ENCODE measurements at regions of chr9 and their contacts with region 1.

Region 1: GRCh38 chr9:93566408-93567270 is 9.7 kb upstream of the PHF2 start:
- DNase-seq: peak; percentile 98
- ATAC-seq: peak; percentile 96
- H3K4me3 Mint-ChIP-seq: peak overlapping the region; percentile 85
- H3K27ac Mint-ChIP-seq: peak overlapping the region; percentile 95
- H3K4me1 Mint-ChIP-seq: peaks cover 24% of the 10 kb centered on the region
- H3K27me3 Mint-ChIP-seq: no peaks in the 10 kb centered on the region

Region 2: GRCh38 chr9:93159601-93160471 is 406.8 kb before region 1 on chr9:
- CTCF ChIA-PET with region 1: interaction called, 11 read pairs
- POLR2A ChIA-PET with region 1: no interaction called
- DNase-seq: peak; percentile 77
- ATAC-seq: peak; percentile 94
- H3K4me3 Mint-ChIP-seq: no peak overlapping the region
- H3K27ac Mint-ChIP-seq: no peak overlapping the region
- H3K4me1 Mint-ChIP-seq: peaks cover 18% of the 10 kb centered on the region
- H3K27me3 Mint-ChIP-seq: no peaks in the 10 kb centered on the region

Region 3: DNA sequence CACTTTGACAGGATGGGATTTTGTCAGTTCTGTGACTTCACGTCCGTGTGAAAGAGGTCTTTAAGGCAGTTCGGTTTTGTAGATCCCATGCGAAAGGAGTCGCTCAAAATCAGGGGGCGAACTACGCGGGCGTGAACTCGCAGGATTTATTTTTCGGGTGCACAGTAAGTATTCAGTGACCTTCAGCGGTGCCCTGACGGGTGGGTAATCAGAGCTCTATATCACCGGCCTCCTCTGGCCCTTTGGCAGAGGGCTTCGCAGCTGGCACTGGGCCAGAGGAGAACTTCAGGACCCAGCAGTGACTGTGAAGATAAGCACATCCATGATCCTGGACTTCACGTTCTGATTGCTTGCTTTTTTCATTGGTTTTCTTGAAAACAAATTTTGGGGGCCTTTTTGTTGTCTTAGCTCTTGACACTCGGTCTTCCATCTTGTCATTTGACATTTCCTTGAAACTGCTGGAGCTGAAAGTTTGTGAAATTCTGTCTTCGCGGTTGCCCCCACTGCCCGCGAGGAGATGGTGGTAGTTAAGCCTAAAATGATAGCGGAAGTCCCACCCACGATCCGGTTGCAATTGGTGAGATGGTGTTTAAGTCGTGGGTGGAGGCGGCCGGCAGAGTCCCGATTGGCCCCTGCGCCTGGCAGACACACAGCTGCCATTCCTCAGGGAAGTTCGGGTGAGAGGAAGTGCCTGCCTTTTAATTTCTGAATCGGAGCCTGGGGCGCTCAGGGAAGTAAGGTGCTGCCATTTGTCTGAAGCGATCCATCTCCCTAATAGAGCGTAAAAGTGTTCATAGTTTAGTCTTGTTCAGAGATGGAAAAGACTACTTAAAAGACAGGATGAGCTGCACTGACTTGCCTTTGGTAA is 113.4 kb before region 1 on chr9 and contains the start of gene FAM120AOS:
- CTCF ChIA-PET with region 1: interaction called, 38 read pairs
- POLR2A ChIA-PET with region 1: interaction called, 16 read pairs
- DNase-seq: peak; percentile 91
- ATAC-seq: peak; percentile 77
- H3K4me3 Mint-ChIP-seq: peak within 1 kb of the TSS; percentile 89
- H3K27ac Mint-ChIP-seq: peak within 1 kb of the TSS; percentile 92
- H3K4me1 Mint-ChIP-seq: peaks cover 55% of the 10 kb centered on the region
- H3K27me3 Mint-ChIP-seq: no peaks in the 10 kb centered on the region
- total RNA-seq, gene FAM120AOS: 35.1 to 36.5 TPM

Region 4: GRCh38 chr9:93464395-93464794 is 102.2 kb before region 1 on chr9:
- CTCF ChIA-PET with region 1: interaction called, 26 read pairs
- POLR2A ChIA-PET with region 1: interaction called, 10 read pairs
- DNase-seq: no peak
- ATAC-seq: peak; percentile 28
- H3K4me3 Mint-ChIP-seq: peak overlapping the region; percentile 67
- H3K27ac Mint-ChIP-seq: peak overlapping the region; percentile 92
- H3K4me1 Mint-ChIP-seq: peaks cover 86% of the 10 kb centered on the region
- H3K27me3 Mint-ChIP-seq: no peaks in the 10 kb centered on the region

Region 5: DNA sequence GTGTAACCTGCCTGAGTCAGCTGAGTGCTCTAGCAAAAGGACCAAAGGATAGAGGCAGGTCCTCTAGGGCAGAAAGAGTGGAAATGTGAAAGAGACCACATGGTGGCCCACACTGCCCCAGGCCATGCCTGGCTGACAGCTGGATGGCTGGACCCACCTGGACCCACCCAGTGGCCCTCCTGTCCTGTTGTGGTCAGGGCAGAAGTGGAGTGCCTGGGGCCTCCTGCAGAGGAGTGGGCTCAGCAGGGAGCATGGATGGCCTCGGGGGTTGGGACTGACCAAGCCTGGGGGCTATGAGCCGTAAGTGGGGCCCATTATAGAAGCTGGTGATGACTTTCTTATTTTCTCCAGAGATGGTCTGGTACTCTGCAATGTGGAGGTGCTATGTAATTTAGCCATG is 57.6 kb before region 1 on chr9:
- CTCF ChIA-PET with region 1: interaction called, 14 read pairs
- POLR2A ChIA-PET with region 1: no interaction called
- DNase-seq: no peak
- ATAC-seq: no peak
- H3K4me3 Mint-ChIP-seq: no peak overlapping the region
- H3K27ac Mint-ChIP-seq: peak overlapping the region; percentile 0
- H3K4me1 Mint-ChIP-seq: peaks cover 31% of the 10 kb centered on the region
- H3K27me3 Mint-ChIP-seq: no peaks in the 10 kb centered on the region

Region 6: GRCh38 chr9:93549611-93550010 is 17.0 kb before region 1 on chr9:
- CTCF ChIA-PET with region 1: interaction called, 21 read pairs
- POLR2A ChIA-PET with region 1: interaction called, 6 read pairs
- DNase-seq: no peak
- ATAC-seq: no peak
- H3K4me3 Mint-ChIP-seq: no peak overlapping the region
- H3K27ac Mint-ChIP-seq: peak overlapping the region; percentile 39
- H3K4me1 Mint-ChIP-seq: no peaks in the 10 kb centered on the region
- H3K27me3 Mint-ChIP-seq: no peaks in the 10 kb centered on the region

Region 7: DNA sequence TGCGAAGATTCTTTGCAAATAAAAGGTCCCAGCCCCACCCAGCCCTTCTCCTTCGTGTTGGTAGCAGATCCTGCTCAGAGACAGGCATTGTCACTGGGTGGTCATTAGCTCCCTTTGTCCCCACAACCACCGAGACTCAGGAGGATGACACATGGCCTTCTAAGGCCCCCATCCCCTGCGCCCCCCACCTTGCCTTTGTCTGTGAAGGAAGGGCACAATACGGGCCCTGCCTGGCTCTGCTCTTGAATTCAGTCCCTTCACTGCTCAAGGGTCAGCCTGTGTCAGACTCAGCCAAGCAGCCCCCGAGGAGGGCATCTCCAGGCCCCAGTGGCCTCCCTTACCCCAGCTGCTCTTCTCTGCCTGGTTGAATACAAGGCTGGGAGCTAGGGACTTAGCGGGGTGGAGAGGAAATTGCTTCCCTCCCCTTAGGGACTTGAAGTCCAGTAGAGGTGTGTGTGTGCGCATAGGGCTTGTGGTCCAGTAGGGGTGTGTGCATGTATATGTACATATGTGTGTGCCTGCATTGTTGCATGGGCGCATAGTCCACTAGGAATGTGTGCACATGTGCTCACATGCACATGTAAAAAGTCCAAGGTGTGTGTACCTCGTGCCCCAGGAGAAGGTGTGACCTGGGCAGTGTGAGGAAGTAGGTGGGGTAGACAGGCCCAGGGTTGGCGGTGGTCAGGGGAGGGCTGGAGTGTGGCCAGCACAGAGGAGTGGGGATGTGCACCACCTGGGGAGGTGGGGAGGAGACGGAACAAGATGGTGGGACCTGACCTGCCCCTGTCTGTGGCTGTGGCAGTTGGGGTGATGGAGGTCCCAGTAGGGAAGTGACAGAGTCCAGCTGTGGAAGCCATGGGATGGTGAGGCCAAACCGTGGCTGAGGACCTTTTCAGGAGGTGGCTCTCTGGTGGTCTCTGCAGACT is 68.8 kb after region 1 on chr9:
- CTCF ChIA-PET with region 1: no interaction called
- POLR2A ChIA-PET with region 1: no interaction called
- DNase-seq: no peak
- ATAC-seq: no peak
- H3K4me3 Mint-ChIP-seq: no peak overlapping the region
- H3K27ac Mint-ChIP-seq: no peak overlapping the region
- H3K4me1 Mint-ChIP-seq: no peaks in the 10 kb centered on the region
- H3K27me3 Mint-ChIP-seq: no peaks in the 10 kb centered on the region